H1 (cell line): ENCODE measurements at regions of chr12 and their contacts with region 1.

Region 1: GRCh38 chr12:101823891-101824290 is 6.9 kb downstream of the GNPTAB start:
- DNase-seq: peak in 1 of 2 experiments; percentile 50
- H3K4me3 ChIP-seq: peak overlapping the region in 1 of 4 experiments; percentile 4; a peak in 1 of 8 replicates
- H3K27ac ChIP-seq: no peak overlapping the region
- H3K4me1 ChIP-seq: peaks cover 6 to 31% (median 22%) of the 10 kb centered on the region in 4 experiments
- H3K27me3 ChIP-seq: no peaks in the 10 kb centered on the region
- CTCF ChIP-seq: peak; percentile 27 to 63 (median 41)
- EP300 ChIP-seq: no peak
- POLR2A ChIP-seq: 0 out of 3 replicates have a peak, but pooled peaks of 1 of the 2 experiments have one; percentile 21
- RAD21 ChIP-seq: peak; percentile 13 to 24; a peak in 2 of 4 replicates

Region 2: GRCh38 chr12:101773650-101774162 is 50.2 kb before region 1 on chr12:
- CTCF ChIA-PET with region 1: interaction called, 77 read pairs
- POLR2A ChIA-PET with region 1: no interaction called
- DNase-seq: peak; percentile 5 to 64
- H3K4me3 ChIP-seq: no peak overlapping the region
- H3K27ac ChIP-seq: no peak overlapping the region
- H3K4me1 ChIP-seq: no peaks in the 10 kb centered on the region
- H3K27me3 ChIP-seq: no peaks in the 10 kb centered on the region
- CTCF ChIP-seq: peak; percentile 34 to 80 (median 79)
- EP300 ChIP-seq: no peak
- POLR2A ChIP-seq: no peak
- RAD21 ChIP-seq: peak; percentile 94 to 95

Region 3: DNA sequence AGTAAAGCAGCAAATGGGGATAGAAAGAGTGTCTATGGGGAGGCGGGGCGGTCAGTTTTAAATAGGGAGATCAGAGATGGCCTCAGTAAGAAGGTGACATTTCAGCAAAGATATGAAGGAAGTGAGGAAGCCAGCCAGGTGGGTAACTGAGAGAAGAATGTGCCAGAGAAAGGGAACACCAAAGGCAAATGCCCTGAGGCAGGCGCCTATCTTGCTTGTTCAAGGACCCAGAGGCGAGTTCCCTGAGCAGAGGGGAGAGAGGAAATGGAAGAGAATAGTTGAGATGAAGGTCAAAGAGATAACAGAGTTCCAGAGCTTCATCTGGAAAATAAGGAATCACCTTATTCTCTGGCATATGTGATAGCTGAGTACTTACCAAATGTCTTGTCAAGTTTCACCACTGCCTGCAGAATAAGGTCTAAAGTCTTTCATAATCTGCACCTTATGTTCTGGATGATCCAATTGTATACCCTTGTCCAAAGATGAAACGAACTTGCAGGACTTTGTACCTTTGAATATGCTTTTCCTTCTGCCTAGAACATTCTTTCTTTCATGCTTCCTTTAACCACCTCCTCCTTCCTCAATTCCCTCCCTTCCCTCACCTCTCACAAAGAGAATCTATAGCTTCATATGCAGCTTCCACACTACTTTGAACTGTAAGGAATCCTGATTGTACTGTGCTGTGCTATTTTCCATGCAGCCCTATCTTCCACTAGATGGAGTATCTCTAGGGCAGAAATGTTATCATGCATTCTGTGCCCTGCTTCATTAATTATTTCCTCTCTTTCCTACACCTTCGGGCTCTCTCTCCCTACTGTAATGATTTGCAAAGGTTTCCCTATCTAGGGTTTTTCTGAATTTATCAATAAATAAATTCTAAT is 31.6 kb before region 1 on chr12:
- CTCF ChIA-PET with region 1: interaction called, 22 read pairs
- POLR2A ChIA-PET with region 1: interaction called, 3 read pairs
- DNase-seq: no peak
- H3K4me3 ChIP-seq: no peak overlapping the region
- H3K27ac ChIP-seq: no peak overlapping the region
- H3K4me1 ChIP-seq: no peaks in the 10 kb centered on the region
- H3K27me3 ChIP-seq: no peaks in the 10 kb centered on the region
- CTCF ChIP-seq: peak in 1 of 3 experiments; percentile 31; a peak in 1 of 4 replicates
- EP300 ChIP-seq: no peak
- POLR2A ChIP-seq: no peak
- RAD21 ChIP-seq: no peak

Region 4: GRCh38 chr12:101813117-101813516 is 10.8 kb before region 1 on chr12:
- CTCF ChIA-PET with region 1: interaction called, 11 read pairs
- POLR2A ChIA-PET with region 1: interaction called, 7 read pairs
- DNase-seq: no peak
- H3K4me3 ChIP-seq: no peak overlapping the region
- H3K27ac ChIP-seq: no peak overlapping the region
- H3K4me1 ChIP-seq: peaks cover 1 to 6% (median 2%) of the 10 kb centered on the region in 4 experiments; a peak in 2 of 7 replicates
- H3K27me3 ChIP-seq: no peaks in the 10 kb centered on the region
- CTCF ChIP-seq: no peak
- EP300 ChIP-seq: no peak
- POLR2A ChIP-seq: no peak
- RAD21 ChIP-seq: no peak

Region 5: DNA sequence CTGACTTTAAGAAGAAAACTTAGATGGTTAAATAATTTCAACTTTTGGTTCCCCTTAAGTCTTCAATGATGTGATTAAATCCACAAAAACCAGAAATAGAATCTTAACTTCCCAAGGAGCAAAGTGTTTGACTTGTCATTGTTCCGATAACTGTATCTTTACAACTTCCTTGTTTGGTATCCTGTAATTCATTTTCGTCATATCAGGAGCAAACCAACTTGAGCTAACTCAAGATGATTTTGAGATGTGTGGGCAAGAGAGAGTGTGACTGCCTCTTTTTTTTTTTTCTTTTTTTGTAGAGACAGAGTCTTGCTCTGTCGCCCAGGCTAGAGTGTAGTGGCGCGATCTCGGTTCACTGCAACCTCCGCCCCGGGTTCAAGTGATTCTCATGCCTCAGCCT is 78.8 kb after region 1 on chr12:
- CTCF ChIA-PET with region 1: no interaction called
- POLR2A ChIA-PET with region 1: no interaction called
- DNase-seq: no peak
- H3K4me3 ChIP-seq: no peak overlapping the region
- H3K27ac ChIP-seq: no peak overlapping the region
- H3K4me1 ChIP-seq: peaks cover 0 to under 1% (median 0%) of the 10 kb centered on the region in 4 experiments; a peak in 1 of 7 replicates
- H3K27me3 ChIP-seq: no peaks in the 10 kb centered on the region
- CTCF ChIP-seq: no peak
- EP300 ChIP-seq: no peak
- POLR2A ChIP-seq: no peak
- RAD21 ChIP-seq: no peak